Psoas muscle (tissue), 8 donors: ENCODE measurements at regions of chr18 and their contacts with region 1.

Region 1: DNA sequence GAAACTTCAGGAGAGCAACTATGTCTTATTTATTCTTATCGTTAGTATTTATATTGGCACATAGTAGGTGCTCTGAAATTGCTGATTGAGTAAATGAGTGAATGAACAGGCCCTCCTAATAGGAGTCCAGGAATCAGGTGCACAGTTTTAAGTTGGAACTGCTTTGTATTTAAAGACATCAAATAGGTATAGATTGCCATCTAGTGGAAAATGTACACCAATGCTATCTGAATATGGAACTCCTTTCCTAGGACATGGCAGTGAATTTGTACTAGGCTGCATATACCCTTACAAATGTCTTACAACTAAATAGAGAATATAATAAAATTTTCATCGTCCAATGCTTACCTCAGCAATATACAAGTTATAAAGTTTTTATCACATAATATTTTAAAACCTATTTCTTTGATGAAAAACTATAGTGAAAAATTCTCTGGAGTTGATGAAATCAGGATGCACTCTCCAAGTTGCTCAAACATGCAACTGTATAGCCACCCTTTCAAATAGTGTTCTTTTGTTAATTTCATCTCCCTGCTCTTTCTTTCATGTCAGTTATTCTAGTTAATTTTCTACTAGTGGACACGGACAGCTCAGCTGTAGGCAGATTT is 318.9 kb upstream of the SYT4 start:
- DNase-seq: no peak
- ATAC-seq: peak in 2 of 4 donors; percentile 39 to 56
- H3K4me3 ChIP-seq: no peak overlapping the region
- H3K27ac ChIP-seq: no peak overlapping the region
- H3K4me1 ChIP-seq: no peaks in the 10 kb centered on the region
- H3K27me3 ChIP-seq: no peaks in the 10 kb centered on the region
- CTCF ChIP-seq: peak; percentile 45

Region 2: GRCh38 chr18:41809652-41810051 is 1786.6 kb before region 1 on chr18:
- intact Hi-C with region 1: no loop called
- DNase-seq: no peak
- ATAC-seq: no peak
- H3K4me3 ChIP-seq: no peak overlapping the region
- H3K27ac ChIP-seq: no peak overlapping the region
- H3K4me1 ChIP-seq: no peaks in the 10 kb centered on the region
- H3K27me3 ChIP-seq: no peaks in the 10 kb centered on the region
- CTCF ChIP-seq: no peak

Region 3: DNA sequence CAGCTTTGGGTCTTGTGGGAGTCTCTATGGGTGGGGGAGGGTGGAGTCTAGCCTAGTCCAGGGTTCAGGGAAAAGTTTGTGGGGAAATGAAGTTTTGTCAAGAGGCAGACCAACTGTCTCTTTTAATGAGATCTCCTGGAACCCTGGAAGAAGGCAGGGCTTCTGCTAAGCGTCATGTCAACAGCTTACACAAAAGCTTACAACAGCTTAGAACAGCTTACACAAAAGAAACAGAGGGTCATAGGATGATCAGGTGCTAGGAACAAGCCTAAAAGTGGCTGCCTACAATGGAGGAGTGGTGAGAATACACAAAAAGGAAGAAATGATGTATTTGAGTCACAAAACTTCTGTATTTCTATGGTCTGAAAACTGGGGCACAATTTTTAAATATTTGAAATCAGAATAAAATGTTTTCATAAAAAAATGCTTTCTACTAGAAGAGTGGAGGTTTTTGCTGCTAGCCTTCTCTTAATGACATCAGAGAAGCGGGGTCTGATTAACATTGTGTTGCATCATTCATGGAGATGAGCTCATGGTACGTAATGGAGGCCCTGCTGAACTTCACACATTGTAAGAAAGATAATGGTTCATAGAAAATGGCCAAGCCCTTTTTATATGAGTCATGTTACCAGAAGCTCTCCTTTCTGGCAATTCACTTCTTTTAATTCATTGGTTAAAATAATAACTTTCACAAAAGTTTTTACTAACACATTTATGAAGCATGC is 1290.2 kb before region 1 on chr18:
- intact Hi-C with region 1: loop called in 1 of 2 experiments (anchors 10 kb)
- DNase-seq: no peak
- ATAC-seq: no peak
- H3K4me3 ChIP-seq: no peak overlapping the region
- H3K27ac ChIP-seq: no peak overlapping the region
- H3K4me1 ChIP-seq: no peaks in the 10 kb centered on the region
- H3K27me3 ChIP-seq: peaks cover 0 to 5% (median 0%) of the 10 kb centered on the region in 3 donors
- CTCF ChIP-seq: no peak